ENCODE measurements at regions of chr14 and their contacts with region 1.

Region 1: GRCh38 chr14:21498553-21499526 is 12.3 kb downstream of the METTL3 start:
- DNase-seq: peak; percentile 49 to 59
- ATAC-seq: peak; percentile 86 to 87
- H3K4me3 ChIP-seq: no peak overlapping the region
- H3K27ac ChIP-seq: no peak overlapping the region
- H3K4me1 ChIP-seq: peaks cover 8% of the 10 kb centered on the region; the same call in 2 of the 3 replicates
- CTCF ChIP-seq: peak; percentile 72
- EP300 ChIP-seq: no peak
- POLR2A ChIP-seq: no peak
- RAD21 ChIP-seq: peak; percentile 51 to 53

Region 2: DNA sequence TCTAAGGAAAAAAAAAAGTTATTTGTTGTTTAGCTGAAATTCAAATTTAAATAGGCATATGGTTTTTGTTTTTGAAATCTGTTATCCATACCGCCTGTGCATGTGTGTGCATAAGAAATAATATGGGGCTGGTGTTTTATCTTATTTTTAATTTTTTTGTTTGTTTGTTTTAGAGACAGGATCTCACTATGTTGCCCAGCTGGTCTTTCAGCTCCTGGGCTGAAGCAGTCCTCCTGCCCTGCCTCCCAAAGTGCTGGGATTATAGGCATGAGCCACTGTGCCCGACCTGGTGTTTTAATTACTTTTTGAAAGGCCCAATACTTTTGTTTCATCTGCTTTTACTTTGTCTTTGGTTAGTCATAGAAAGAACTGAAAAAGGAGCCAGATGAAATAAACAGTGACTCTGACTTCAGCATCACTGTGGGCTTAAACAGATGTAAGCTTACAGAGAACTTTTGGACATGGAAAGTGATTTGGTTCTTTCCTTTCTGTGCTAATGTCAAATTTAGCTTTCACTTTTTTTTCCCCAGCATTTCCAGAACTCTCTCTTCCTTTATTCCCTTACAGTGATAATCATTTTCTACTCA is 152.2 kb before region 1 on chr14:
- CTCF ChIA-PET with region 1: no interaction called
- POLR2A ChIA-PET with region 1: no interaction called
- DNase-seq: no peak
- ATAC-seq: no peak; a peak in 1 of 6 replicates
- H3K4me3 ChIP-seq: no peak overlapping the region
- H3K27ac ChIP-seq: no peak overlapping the region
- H3K4me1 ChIP-seq: no peaks in the 10 kb centered on the region
- CTCF ChIP-seq: no peak
- EP300 ChIP-seq: no peak
- POLR2A ChIP-seq: no peak
- RAD21 ChIP-seq: no peak

Region 3: DNA sequence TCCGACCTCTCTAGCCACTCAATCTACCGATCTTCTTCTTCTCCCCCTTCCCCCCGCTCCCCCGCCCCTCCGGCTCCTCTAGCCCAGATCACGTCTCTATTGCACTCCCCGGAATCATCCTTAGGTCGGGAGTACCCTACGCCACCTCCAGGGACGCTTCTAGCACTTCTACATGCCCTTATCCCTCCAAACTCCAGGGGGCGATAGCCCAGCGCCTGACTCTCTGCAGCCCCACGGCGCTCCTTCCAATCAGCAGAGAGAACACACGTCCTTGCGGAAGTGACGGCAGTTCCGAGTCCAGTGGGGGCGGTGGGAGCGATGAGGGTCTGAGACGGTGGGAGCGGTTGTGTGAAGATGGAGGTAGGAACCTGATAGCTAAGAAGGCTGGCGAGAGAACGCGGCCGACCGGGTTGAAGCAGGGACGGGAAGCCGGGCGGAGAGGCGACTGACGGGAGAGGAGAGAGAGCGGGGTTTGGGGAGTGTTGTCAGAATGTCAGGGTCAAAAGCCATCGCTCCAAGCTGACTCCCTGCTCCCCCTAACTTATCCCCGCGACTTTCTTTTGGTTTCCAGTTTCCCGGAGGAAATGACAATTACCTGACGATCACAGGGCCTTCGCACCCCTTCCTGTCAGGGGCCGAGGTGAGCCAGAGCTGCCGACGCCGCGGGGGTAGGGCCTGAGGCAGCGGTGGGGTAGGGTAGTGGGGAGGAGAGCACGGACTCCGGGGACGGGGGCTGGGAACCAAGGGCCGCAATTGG is 21.7 kb before region 1 on chr14 and contains the starts of genes RAB2B and TOX4:
- CTCF ChIA-PET with region 1: interaction called, 58 read pairs
- POLR2A ChIA-PET with region 1: interaction called, 6 read pairs
- DNase-seq: peak; percentile 91 to 99
- ATAC-seq: peak; percentile 97 to 100
- H3K4me3 ChIP-seq: peak within 1 kb of the TSS; percentile 78
- H3K27ac ChIP-seq: peak within 1 kb of the TSS; percentile 72 to 91
- H3K4me1 ChIP-seq: peaks cover 12% of the 10 kb centered on the region
- CTCF ChIP-seq: peak; percentile 84
- EP300 ChIP-seq: peak in 1 of 2 experiments; percentile 16; a peak in 1 of 5 replicates
- POLR2A ChIP-seq: peak; percentile 65
- RAD21 ChIP-seq: no peak
- polyA plus RNA-seq, gene RAB2B: 37.5 and 41.3 TPM in 2 replicates
- polyA plus RNA-seq, gene TOX4: 76.4 and 80.3 TPM in 2 replicates

Region 4: GRCh38 chr14:21510735-21511657 is 12.2 kb after region 1 on chr14 and contains the start of gene METTL3:
- CTCF ChIA-PET with region 1: interaction called, 21 read pairs
- POLR2A ChIA-PET with region 1: interaction called, 10 read pairs
- DNase-seq: peak; percentile 95 to 99
- ATAC-seq: peak; percentile 99
- H3K4me3 ChIP-seq: peak within 1 kb of the TSS; percentile 73
- H3K27ac ChIP-seq: peak within 1 kb of the TSS; percentile 79 to 91
- H3K4me1 ChIP-seq: peaks cover 6% of the 10 kb centered on the region; the same call in 2 of the 3 replicates
- CTCF ChIP-seq: no peak
- EP300 ChIP-seq: no peak
- POLR2A ChIP-seq: peak; percentile 82
- RAD21 ChIP-seq: no peak
- polyA plus RNA-seq, gene METTL3: 103 and 118 TPM in 2 replicates

Region 5: GRCh38 chr14:21525962-21526671 is 27.3 kb after region 1 on chr14 and contains the start of gene SALL2:
- CTCF ChIA-PET with region 1: interaction called, 13 read pairs
- POLR2A ChIA-PET with region 1: no interaction called
- DNase-seq: peak; percentile 11 to 31
- ATAC-seq: peak; percentile 67 to 87; a peak in 5 of 6 replicates
- H3K4me3 ChIP-seq: peak within 1 kb of the TSS; percentile 52
- H3K27ac ChIP-seq: peak within 1 kb of the TSS; percentile 60 to 88
- H3K4me1 ChIP-seq: 0 out of 3 replicates have a peak, but pooled peaks cover 3% of the 10 kb centered on the region
- CTCF ChIP-seq: no peak
- EP300 ChIP-seq: no peak
- POLR2A ChIP-seq: peak; percentile 8; the same call in 1 of the 2 replicates
- RAD21 ChIP-seq: no peak
- polyA plus RNA-seq, gene SALL2: 2.8 and 3.8 TPM in 2 replicates